MCF 10A (cell line): ENCODE measurements at regions of chr1 and their contacts with region 1.

Region 1: GRCh38 chr1:100459358-100460114 is 78.4 kb upstream of the GPR88 start:
- DNase-seq: peak; percentile 83
- H3K4me3 Mint-ChIP-seq: no peak overlapping the region
- H3K27ac Mint-ChIP-seq: no peak overlapping the region
- H3K4me1 Mint-ChIP-seq: peaks cover 7% of the 10 kb centered on the region
- H3K27me3 Mint-ChIP-seq: no peaks in the 10 kb centered on the region
- CTCF ChIP-seq: peak; percentile 75

Region 2: DNA sequence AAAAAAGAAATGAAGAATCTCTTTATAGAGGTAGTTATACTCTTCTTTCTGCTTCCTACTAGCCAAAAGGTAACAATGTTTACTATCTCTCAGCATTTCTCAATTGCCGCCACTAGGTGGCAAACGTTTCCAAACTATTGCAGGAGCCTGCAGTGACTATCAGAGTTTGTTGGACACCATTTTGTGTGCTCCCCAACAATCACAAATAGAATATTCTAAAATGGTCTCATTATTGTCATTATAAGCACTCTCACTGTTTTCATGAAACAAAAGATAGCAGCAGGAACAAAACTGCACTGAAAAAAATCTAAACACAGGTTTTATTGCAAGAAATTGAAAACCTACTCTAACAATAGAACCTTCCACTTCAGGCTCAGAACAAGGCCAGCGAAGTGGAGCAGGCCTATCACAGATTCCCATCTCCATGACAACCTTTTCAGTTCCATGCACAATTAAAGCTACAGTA is 1279.2 kb before region 1 on chr1:
- CTCF ChIA-PET with region 1: interaction called, 3 read pairs
- POLR2A ChIA-PET with region 1: no interaction called
- intact Hi-C with region 1: loop called (anchors 1 kb)
- DNase-seq: peak; percentile 79
- H3K4me3 Mint-ChIP-seq: no peak overlapping the region
- H3K27ac Mint-ChIP-seq: no peak overlapping the region
- H3K4me1 Mint-ChIP-seq: no peaks in the 10 kb centered on the region
- H3K27me3 Mint-ChIP-seq: no peaks in the 10 kb centered on the region
- CTCF ChIP-seq: peak; percentile 70

Region 3: DNA sequence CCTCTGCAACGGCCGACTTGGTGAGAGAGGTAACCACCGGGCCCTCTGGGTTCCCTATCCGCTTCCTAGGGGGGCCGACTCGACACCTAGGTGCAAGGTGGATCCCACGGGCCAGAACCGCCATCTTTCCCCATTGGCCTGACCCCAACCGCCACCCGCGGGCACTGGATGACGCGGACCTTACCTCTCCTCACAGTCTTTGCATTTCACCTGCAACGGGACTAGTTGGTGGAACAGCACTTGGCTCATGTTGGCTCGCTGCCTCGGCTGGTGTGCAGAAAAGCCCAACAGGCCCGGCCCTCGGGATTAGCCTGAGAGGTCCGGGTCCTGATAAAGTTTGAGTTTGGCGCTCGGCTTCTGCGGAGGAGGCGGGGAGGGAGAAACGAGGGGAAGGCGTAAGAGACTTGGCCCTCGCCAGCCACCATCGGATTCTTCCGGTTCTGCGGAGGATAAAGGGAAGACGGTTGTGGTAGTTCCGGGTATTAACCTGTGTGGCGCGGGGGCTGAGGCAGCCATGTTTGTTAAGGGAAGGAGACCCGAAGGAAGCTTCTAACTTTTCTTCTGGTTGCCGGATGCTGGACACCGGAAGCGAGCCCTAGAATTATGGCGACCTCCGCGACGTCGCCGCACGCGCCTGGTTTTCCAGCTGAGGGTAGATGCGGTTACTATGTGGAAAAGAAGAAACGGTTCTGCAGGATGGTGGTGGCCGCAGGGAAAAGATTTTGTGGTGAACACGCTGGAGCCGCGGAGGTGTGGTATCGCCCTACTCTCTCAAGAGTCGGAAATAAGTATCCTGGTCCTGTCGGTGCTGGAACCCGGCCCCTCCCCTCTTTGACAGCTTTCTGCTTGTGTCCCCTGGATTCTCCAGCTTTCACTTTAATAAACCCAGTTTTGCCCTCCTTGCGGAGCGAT is 326.7 kb before region 1 on chr1 and contains the starts of genes SASS6 and TRMT13:
- CTCF ChIA-PET with region 1: interaction called, 12 read pairs
- POLR2A ChIA-PET with region 1: interaction called, 5 read pairs
- intact Hi-C with region 1: loop called (anchors 2 kb)
- DNase-seq: peak; percentile 98
- H3K4me3 Mint-ChIP-seq: peak within 1 kb of the TSS; percentile 86
- H3K27ac Mint-ChIP-seq: peak within 1 kb of the TSS; percentile 75
- H3K4me1 Mint-ChIP-seq: peaks cover 19% of the 10 kb centered on the region
- H3K27me3 Mint-ChIP-seq: no peaks in the 10 kb centered on the region
- CTCF ChIP-seq: no peak
- total RNA-seq, gene SASS6: 6.6 and 7.5 TPM in 2 replicates
- total RNA-seq, gene TRMT13: 24.2 and 25.5 TPM in 2 replicates

Region 4: GRCh38 chr1:100219883-100220282 is 239.7 kb before region 1 on chr1:
- CTCF ChIA-PET with region 1: no interaction called
- POLR2A ChIA-PET with region 1: no interaction called
- intact Hi-C with region 1: no loop called
- DNase-seq: peak; percentile 35
- H3K4me3 Mint-ChIP-seq: no peak overlapping the region
- H3K27ac Mint-ChIP-seq: no peak overlapping the region
- H3K4me1 Mint-ChIP-seq: no peaks in the 10 kb centered on the region
- H3K27me3 Mint-ChIP-seq: no peaks in the 10 kb centered on the region
- CTCF ChIP-seq: no peak

Region 5: GRCh38 chr1:100292711-100293110 is 166.8 kb before region 1 on chr1:
- CTCF ChIA-PET with region 1: interaction called, 6 read pairs
- POLR2A ChIA-PET with region 1: no interaction called
- intact Hi-C with region 1: loop called (anchors 5 kb)
- DNase-seq: no peak
- H3K4me3 Mint-ChIP-seq: no peak overlapping the region
- H3K27ac Mint-ChIP-seq: no peak overlapping the region
- H3K4me1 Mint-ChIP-seq: no peaks in the 10 kb centered on the region
- H3K27me3 Mint-ChIP-seq: no peaks in the 10 kb centered on the region
- CTCF ChIP-seq: no peak

Region 6: DNA sequence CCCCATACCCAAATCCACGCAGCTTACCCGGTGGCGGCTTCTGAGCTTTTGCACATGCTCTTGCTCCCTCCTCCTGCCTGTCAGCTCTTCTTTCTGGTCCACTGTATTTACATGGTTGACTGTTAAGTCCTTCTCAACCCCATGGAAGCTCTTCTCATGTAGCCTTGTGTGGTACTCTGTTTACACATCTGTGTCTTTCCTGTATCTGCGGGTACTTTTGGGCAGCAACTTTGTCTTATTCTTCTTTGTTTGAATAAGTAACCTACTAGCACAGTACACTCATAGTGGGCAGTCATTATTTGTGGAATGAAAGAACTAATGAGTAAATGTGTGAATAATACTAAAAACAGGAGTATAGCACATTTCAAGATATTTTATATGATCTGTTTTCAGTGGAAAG is 10.1 kb before region 1 on chr1:
- CTCF ChIA-PET with region 1: interaction called, 27 read pairs
- POLR2A ChIA-PET with region 1: no interaction called
- intact Hi-C with region 1: no loop called
- DNase-seq: no peak
- H3K4me3 Mint-ChIP-seq: no peak overlapping the region
- H3K27ac Mint-ChIP-seq: no peak overlapping the region
- H3K4me1 Mint-ChIP-seq: no peaks in the 10 kb centered on the region
- H3K27me3 Mint-ChIP-seq: no peaks in the 10 kb centered on the region
- CTCF ChIP-seq: no peak

Region 7: GRCh38 chr1:100543640-100544039 is 84.1 kb after region 1 on chr1:
- CTCF ChIA-PET with region 1: interaction called, 3 read pairs
- POLR2A ChIA-PET with region 1: no interaction called
- intact Hi-C with region 1: loop called (anchors 1 kb)
- DNase-seq: peak; percentile 56
- H3K4me3 Mint-ChIP-seq: no peak overlapping the region
- H3K27ac Mint-ChIP-seq: no peak overlapping the region
- H3K4me1 Mint-ChIP-seq: no peaks in the 10 kb centered on the region
- H3K27me3 Mint-ChIP-seq: peaks cover 3% of the 10 kb centered on the region
- CTCF ChIP-seq: peak; percentile 23

Region 8: GRCh38 chr1:100631015-100631551 is 171.5 kb after region 1 on chr1:
- CTCF ChIA-PET with region 1: no interaction called
- POLR2A ChIA-PET with region 1: no interaction called
- intact Hi-C with region 1: no loop called
- DNase-seq: peak; percentile 42
- H3K4me3 Mint-ChIP-seq: no peak overlapping the region
- H3K27ac Mint-ChIP-seq: no peak overlapping the region
- H3K4me1 Mint-ChIP-seq: peaks cover 24% of the 10 kb centered on the region
- H3K27me3 Mint-ChIP-seq: no peaks in the 10 kb centered on the region
- CTCF ChIP-seq: no peak